Activated T-helper 1 cell treated with anti-CD3 and anti-CD28 coated beads, Interleukin-12 subunit alpha, Interleukin-12 subunit beta, Interleukin-2, Interleukin-4 antibody, amounts not matched to agents 30 ng/mL and 10 ng/mL and 1 ng/mL, durations not matched to agents 14 hours and 24 hours and 36 hours (primary cell): ENCODE measurements at regions of chr4 and their contacts with region 1.

Region 1: GRCh38 chr4:3074078-3074795 is at the starts of genes HTT and HTT-AS:
- DNase-seq: peak; percentile 90
- H3K4me3 Mint-ChIP-seq: peak within 1 kb of the TSS; percentile 89
- H3K27ac Mint-ChIP-seq: peak within 1 kb of the TSS; percentile 90
- H3K4me1 Mint-ChIP-seq: peaks cover 27% of the 10 kb centered on the region
- H3K27me3 Mint-ChIP-seq: no peaks in the 10 kb centered on the region
- total RNA-seq, gene HTT: 65.9 and 66.9 TPM in 2 replicates
- total RNA-seq, gene HTT-AS: not detected in 2 replicates

Region 2: DNA sequence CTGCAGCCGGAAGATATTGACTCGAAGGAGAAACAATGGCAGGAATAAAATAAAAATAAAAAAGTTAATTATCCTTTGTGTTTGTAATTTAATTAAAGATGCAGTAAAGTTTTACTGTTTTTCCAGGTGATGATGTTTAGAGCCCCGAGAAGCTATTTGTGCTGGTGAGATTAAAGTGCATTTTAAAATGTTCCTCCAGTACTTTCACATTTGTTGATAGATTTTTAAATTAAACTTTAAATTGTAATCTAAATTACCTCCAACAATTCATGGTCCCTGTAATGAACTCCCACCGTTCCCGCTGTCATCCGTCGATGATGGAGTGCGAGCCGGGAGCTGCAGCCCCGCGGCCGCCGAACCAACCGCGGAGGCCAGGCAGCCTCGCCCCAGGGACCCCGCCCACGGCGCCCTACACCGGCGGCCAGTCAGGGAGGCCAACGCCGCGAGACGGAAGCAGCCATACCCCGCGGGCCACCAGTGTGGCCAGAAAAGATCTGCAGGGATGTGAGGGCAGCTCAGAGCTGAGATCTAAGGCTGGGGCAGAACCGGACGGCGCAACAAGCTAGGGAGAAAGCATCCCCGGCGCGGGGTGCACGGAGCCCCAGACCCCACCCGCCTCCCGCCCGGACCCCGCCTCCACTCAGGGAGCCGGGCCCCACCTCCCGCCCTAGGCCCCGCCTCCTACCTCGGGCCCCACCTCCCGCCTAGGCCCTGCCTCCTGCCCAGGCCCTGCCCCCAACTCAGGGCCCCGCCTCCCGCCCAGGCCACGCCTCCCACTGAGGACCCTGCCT is 1494.1 kb before region 1 on chr4:
- intact Hi-C with region 1: loop called (anchors 2 kb)
- DNase-seq: peak; percentile 73
- H3K4me3 Mint-ChIP-seq: peak overlapping the region; percentile 49
- H3K27ac Mint-ChIP-seq: no peak overlapping the region
- H3K4me1 Mint-ChIP-seq: no peaks in the 10 kb centered on the region
- H3K27me3 Mint-ChIP-seq: peaks cover 2% of the 10 kb centered on the region

Region 3: DNA sequence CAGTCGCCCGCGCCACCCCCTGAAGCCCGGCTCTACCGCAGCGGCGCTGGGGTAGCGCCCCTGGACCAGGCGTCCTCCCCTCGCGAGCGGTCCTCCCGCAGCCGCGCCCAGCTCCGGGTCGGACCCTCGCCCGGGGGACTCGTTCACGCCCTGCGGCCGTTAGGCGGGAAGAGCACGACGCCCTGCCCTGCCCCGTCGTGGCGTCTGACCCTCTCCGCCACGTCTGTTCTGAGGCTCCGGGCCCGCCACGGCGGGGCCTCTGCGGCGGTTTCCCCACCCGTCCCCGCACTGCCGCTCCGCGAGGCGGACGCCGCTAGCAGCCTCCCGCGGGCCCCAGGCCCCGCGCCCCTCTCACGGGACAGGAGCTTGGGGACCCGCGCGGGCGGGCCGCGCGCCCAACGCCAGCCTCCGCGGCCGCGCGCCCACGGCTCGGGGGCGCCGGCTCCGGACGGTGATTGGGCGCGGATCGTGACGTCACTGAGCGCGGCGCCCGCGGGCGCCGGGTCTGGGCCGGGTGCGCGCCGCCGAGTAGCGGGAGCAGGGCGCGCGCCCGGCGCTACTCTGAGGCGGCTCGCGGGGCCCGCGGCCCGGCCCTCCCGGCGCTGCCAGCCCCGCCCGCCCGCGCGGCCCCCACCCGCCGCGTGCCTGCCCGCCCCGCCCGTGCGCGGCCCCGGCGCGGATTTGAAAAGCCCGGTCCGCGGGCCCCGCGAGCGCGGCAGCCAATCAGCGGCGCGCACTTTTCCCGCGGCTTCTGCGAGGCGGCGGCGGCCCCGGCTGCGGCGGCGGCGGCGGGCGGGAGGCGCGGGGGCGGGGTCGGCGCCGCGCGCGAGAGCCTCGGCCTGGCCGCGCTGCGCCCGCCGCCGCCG is 1203.4 kb before region 1 on chr4 and contains the start of gene NSD2:
- intact Hi-C with region 1: loop called (anchors 10 kb)
- DNase-seq: peak; percentile 89
- H3K4me3 Mint-ChIP-seq: peak within 1 kb of the TSS; percentile 100
- H3K27ac Mint-ChIP-seq: peak within 1 kb of the TSS; percentile 100
- H3K4me1 Mint-ChIP-seq: peaks cover 38% of the 10 kb centered on the region
- H3K27me3 Mint-ChIP-seq: peaks cover 1% of the 10 kb centered on the region
- total RNA-seq, gene NSD2: 200 and 202 TPM in 2 replicates

Region 4: DNA sequence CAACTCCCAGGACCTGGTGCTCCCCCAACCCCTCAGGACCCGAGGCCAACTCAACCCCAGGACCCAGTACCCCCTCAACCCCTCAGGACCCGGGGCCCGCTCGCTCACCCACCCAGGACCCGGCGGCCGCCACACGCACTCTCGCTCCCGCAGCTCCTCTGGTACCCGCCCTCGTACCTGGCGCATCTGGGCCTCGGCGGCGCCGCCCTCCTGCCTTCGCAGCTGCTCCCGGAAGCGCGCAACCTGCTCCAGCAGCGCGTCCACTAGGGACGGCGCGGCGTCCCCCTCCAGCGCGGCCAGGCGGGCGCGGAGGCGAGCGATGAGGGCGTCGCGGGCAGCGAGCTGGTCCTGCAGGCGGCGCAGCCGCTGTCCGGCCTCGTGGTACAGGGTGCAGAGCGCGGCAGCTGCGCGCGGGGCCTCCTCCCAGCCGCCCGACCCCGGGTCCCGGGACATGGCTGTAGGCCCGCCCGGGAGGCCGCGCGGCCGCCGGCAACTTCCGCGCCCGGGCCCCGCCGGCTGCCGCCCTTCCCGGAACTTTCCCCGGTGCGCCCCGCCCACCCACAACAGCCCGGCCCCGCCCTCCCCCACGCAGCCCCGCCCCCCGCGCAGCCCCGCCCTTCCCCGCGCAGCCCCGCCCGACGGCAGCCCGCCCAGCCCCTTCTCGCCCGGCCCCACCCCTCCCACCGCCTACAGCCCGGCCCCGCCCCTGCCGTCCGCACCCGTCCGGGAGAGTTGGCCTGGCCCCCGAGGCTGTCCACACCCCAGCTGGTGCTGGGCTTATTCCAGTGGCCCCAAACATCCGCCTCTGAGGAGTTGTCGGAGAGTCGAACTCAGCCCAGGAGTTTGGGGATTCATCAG is 318.2 kb before region 1 on chr4 and contains the start of gene TNIP2:
- intact Hi-C with region 1: loop called (anchors 1 kb)
- DNase-seq: peak; percentile 75
- H3K4me3 Mint-ChIP-seq: peak within 1 kb of the TSS; percentile 86
- H3K27ac Mint-ChIP-seq: peak within 1 kb of the TSS; percentile 82
- H3K4me1 Mint-ChIP-seq: peaks cover 40% of the 10 kb centered on the region
- H3K27me3 Mint-ChIP-seq: no peaks in the 10 kb centered on the region
- total RNA-seq, gene TNIP2: 96.2 and 98.6 TPM in 2 replicates

Region 5: DNA sequence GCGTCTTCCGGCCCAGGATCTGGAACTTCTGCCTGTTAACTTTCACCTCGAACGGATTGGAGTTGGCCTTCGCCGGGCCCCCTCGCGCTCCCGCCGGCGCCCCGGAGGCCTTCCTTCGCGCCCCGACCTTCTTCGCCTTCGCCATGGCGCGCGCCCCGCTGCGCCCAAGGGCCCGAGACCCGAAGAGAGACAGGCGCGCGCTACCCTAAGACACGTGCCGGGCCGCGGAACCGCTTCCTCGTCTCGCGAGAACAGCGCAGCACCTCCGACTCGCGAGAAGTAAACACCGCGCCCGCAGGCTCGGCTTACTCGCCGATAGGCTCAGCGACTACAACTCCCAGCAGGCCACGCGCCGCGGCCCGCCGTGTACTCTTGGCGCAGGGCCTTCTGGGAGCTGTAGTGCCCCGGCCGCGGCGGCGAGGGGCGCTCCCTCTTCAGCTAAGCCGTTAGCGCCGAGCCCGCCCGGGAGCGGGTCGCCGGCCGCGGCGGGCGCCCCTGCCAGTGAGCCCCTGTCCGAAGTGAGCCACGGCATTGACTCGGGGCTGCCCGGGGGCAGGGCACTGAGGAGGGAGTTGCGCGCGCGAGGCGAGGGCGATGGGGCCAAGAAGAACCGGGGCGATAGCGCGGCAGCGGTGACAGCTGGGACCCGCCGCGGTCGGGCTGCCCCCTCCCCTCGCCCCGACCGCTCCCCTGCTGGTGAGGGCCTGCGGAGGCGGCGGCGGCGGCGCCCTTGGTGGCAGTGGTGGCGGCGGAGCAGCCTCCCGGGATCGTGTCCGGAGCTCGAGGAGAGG is 110.9 kb before region 1 on chr4 and contains the starts of genes GRK4 and NOP14:
- intact Hi-C with region 1: loop called (anchors 1 kb)
- DNase-seq: peak; percentile 96
- H3K4me3 Mint-ChIP-seq: peak within 1 kb of the TSS; percentile 97
- H3K27ac Mint-ChIP-seq: peak within 1 kb of the TSS; percentile 92
- H3K4me1 Mint-ChIP-seq: peaks cover 28% of the 10 kb centered on the region
- H3K27me3 Mint-ChIP-seq: no peaks in the 10 kb centered on the region
- total RNA-seq, gene GRK4: 4.4 and 4.5 TPM in 2 replicates
- total RNA-seq, gene NOP14: 140 and 142 TPM in 2 replicates

Region 6: GRCh38 chr4:3292571-3293400 is 218.5 kb after region 1 on chr4 and contains the start of gene RGS12:
- intact Hi-C with region 1: loop called (anchors 1 kb)
- DNase-seq: peak; percentile 80
- H3K4me3 Mint-ChIP-seq: peak within 1 kb of the TSS; percentile 83
- H3K27ac Mint-ChIP-seq: peak within 1 kb of the TSS; percentile 72
- H3K4me1 Mint-ChIP-seq: peaks cover 6% of the 10 kb centered on the region
- H3K27me3 Mint-ChIP-seq: peaks cover 50% of the 10 kb centered on the region
- total RNA-seq, gene RGS12: 3.1 and 3.6 TPM in 2 replicates